Calu3 (cell line): ENCODE measurements at regions of chr5 and their contacts with region 1.

Region 1: GRCh38 chr5:149114403-149115312 is 26.6 kb upstream of the ABLIM3 start:
- DNase-seq: peak; percentile 87
- H3K4me3 Mint-ChIP-seq: no peak overlapping the region
- H3K27ac Mint-ChIP-seq: peak overlapping the region; percentile 64
- H3K4me1 Mint-ChIP-seq: peaks cover 77% of the 10 kb centered on the region
- H3K27me3 Mint-ChIP-seq: no peaks in the 10 kb centered on the region
- CTCF ChIP-seq: peak; percentile 81

Region 2: GRCh38 chr5:148443998-148444397 is 670.7 kb before region 1 on chr5:
- CTCF ChIA-PET with region 1: no interaction called
- intact Hi-C with region 1: loop called (anchors 5 kb)
- DNase-seq: peak; percentile 70
- H3K4me3 Mint-ChIP-seq: no peak overlapping the region
- H3K27ac Mint-ChIP-seq: peak overlapping the region; percentile 23
- H3K4me1 Mint-ChIP-seq: no peaks in the 10 kb centered on the region
- H3K27me3 Mint-ChIP-seq: peaks cover under 1% of the 10 kb centered on the region
- CTCF ChIP-seq: peak; percentile 76

Region 3: GRCh38 chr5:148820461-148821395 is 293.9 kb before region 1 on chr5:
- CTCF ChIA-PET with region 1: interaction called, 18 read pairs
- intact Hi-C with region 1: loop called (anchors 5 kb)
- DNase-seq: peak; percentile 64
- H3K4me3 Mint-ChIP-seq: no peak overlapping the region
- H3K27ac Mint-ChIP-seq: no peak overlapping the region
- H3K4me1 Mint-ChIP-seq: no peaks in the 10 kb centered on the region
- H3K27me3 Mint-ChIP-seq: no peaks in the 10 kb centered on the region
- CTCF ChIP-seq: peak; percentile 61

Region 4: GRCh38 chr5:148957591-148958202 is 157.0 kb before region 1 on chr5:
- CTCF ChIA-PET with region 1: interaction called, 12 read pairs
- intact Hi-C with region 1: loop called (anchors 1 kb)
- DNase-seq: peak; percentile 79
- H3K4me3 Mint-ChIP-seq: no peak overlapping the region
- H3K27ac Mint-ChIP-seq: no peak overlapping the region
- H3K4me1 Mint-ChIP-seq: peaks cover 68% of the 10 kb centered on the region
- H3K27me3 Mint-ChIP-seq: no peaks in the 10 kb centered on the region
- CTCF ChIP-seq: peak; percentile 93

Region 5: GRCh38 chr5:149035372-149035790 is 79.3 kb before region 1 on chr5:
- CTCF ChIA-PET with region 1: interaction called, 68 read pairs
- intact Hi-C with region 1: loop called (anchors 1 kb)
- DNase-seq: peak; percentile 89
- H3K4me3 Mint-ChIP-seq: no peak overlapping the region
- H3K27ac Mint-ChIP-seq: peak overlapping the region; percentile 18
- H3K4me1 Mint-ChIP-seq: peaks cover 41% of the 10 kb centered on the region
- H3K27me3 Mint-ChIP-seq: no peaks in the 10 kb centered on the region
- CTCF ChIP-seq: peak; percentile 82

Region 6: GRCh38 chr5:149125386-149125891 is 10.8 kb after region 1 on chr5:
- CTCF ChIA-PET with region 1: interaction called, 13 read pairs
- intact Hi-C with region 1: no loop called
- DNase-seq: peak; percentile 76
- H3K4me3 Mint-ChIP-seq: peak overlapping the region; percentile 62
- H3K27ac Mint-ChIP-seq: peak overlapping the region; percentile 74
- H3K4me1 Mint-ChIP-seq: peaks cover 65% of the 10 kb centered on the region
- H3K27me3 Mint-ChIP-seq: no peaks in the 10 kb centered on the region
- CTCF ChIP-seq: peak; percentile 49